ENCODE measurements at regions of chr1 and their contacts with region 1.

Region 1: GRCh38 chr1:26993237-26994019 is at the start of gene TRNP1:
- DNase-seq: peak; percentile 24 to 79 (median 50)
- ATAC-seq: peak; percentile 75
- H3K4me3 ChIP-seq: peak within 1 kb of the TSS; percentile 53
- H3K4me3 Mint-ChIP-seq: peak within 1 kb of the TSS; percentile 74 to 91 (median 78)
- H3K27ac ChIP-seq: no peak within 1 kb of the TSS
- H3K27ac Mint-ChIP-seq: peak within 1 kb of the TSS in 3 of 9 donors; percentile 48 to 68 (median 50)
- H3K4me1 ChIP-seq: peaks cover 5 to 21% of the 10 kb centered on the region in 2 donors
- H3K4me1 Mint-ChIP-seq: peaks cover 5 to 27% (median 22%) of the 10 kb centered on the region in 7 donors
- H3K27me3 ChIP-seq: peaks cover 0 to 18% of the 10 kb centered on the region in 2 donors
- H3K27me3 Mint-ChIP-seq: peaks cover 37 to 71% (median 42%) of the 10 kb centered on the region in 5 donors
- total RNA-seq, gene TRNP1: 0.19 to 5.0 TPM in 2 of 5 experiments, not detected in the others

Region 2: GRCh38 chr1:26900001-26900814 is 93.2 kb before region 1 on chr1 and contains the start of gene GPATCH3:
- CTCF ChIA-PET with region 1: no interaction called
- POLR2A ChIA-PET with region 1: no interaction called
- intact Hi-C with region 1: loop called in 1 of 2 experiments (anchors 5 kb)
- DNase-seq: peak; percentile 68 to 89 (median 86)
- ATAC-seq: peak; percentile 93
- H3K4me3 ChIP-seq: peak within 1 kb of the TSS; percentile 94
- H3K4me3 Mint-ChIP-seq: peak within 1 kb of the TSS; percentile 87 to 99 (median 96)
- H3K27ac ChIP-seq: peak within 1 kb of the TSS; percentile 90
- H3K27ac Mint-ChIP-seq: peak within 1 kb of the TSS; percentile 94 to 100 (median 99)
- H3K4me1 ChIP-seq: peaks cover 10 to 16% of the 10 kb centered on the region in 2 donors
- H3K4me1 Mint-ChIP-seq: peaks cover 24 to 46% (median 39%) of the 10 kb centered on the region in 7 donors
- H3K27me3 ChIP-seq: no peaks in the 10 kb centered on the region
- H3K27me3 Mint-ChIP-seq: no peaks in the 10 kb centered on the region
- total RNA-seq, gene GPATCH3: 17.0 to 38.4 (median 22.6) TPM

Region 3: DNA sequence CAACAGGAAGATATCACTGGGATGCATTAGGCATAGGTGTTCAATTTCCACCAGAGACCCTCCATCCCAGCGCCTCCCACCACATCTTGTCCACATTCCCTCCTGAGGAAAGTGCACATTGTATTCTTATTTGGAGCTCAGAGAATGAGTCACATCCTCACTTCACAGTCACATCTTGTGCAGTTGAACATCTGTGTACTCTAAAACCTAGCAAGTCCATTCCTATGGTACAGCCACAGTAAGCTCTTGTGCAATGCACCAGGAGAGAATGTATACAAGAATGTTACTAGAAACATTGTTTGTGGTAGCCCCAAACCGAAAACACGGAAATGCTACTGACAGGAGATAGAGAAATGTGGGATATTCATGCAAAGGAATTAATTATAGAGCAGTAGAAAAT is 31.6 kb before region 1 on chr1:
- CTCF ChIA-PET with region 1: no interaction called
- POLR2A ChIA-PET with region 1: no interaction called
- intact Hi-C with region 1: loop called in 1 of 2 experiments (anchors 1 kb)
- DNase-seq: no peak
- ATAC-seq: no peak
- H3K4me3 ChIP-seq: no peak overlapping the region
- H3K4me3 Mint-ChIP-seq: peak overlapping the region in 1 of 10 donors; percentile 13
- H3K27ac ChIP-seq: no peak overlapping the region
- H3K27ac Mint-ChIP-seq: no peak overlapping the region
- H3K4me1 ChIP-seq: peaks cover 6 to 8% of the 10 kb centered on the region in 2 donors
- H3K4me1 Mint-ChIP-seq: peaks cover 4 to 11% (median 5%) of the 10 kb centered on the region in 7 donors
- H3K27me3 ChIP-seq: no peaks in the 10 kb centered on the region
- H3K27me3 Mint-ChIP-seq: peaks cover 12 to 69% (median 29%) of the 10 kb centered on the region in 5 donors

Region 4: GRCh38 chr1:27044613-27045151 is 51.3 kb after region 1 on chr1:
- CTCF ChIA-PET with region 1: interaction called, 6 read pairs
- POLR2A ChIA-PET with region 1: no interaction called
- intact Hi-C with region 1: loop called in 1 of 2 experiments (anchors 2 kb)
- DNase-seq: peak; percentile 69 to 92 (median 86)
- ATAC-seq: peak; percentile 95
- H3K4me3 ChIP-seq: peak overlapping the region; percentile 39
- H3K4me3 Mint-ChIP-seq: peak overlapping the region; percentile 39 to 85 (median 64)
- H3K27ac ChIP-seq: peak overlapping the region; percentile 58
- H3K27ac Mint-ChIP-seq: peak overlapping the region; percentile 1 to 86 (median 40)
- H3K4me1 ChIP-seq: peaks cover 0 to 15% of the 10 kb centered on the region in 2 donors
- H3K4me1 Mint-ChIP-seq: peaks cover 3 to 26% (median 19%) of the 10 kb centered on the region in 7 donors
- H3K27me3 ChIP-seq: no peaks in the 10 kb centered on the region
- H3K27me3 Mint-ChIP-seq: no peaks in the 10 kb centered on the region

Region 5: GRCh38 chr1:27097484-27097917 is 104.1 kb after region 1 on chr1:
- CTCF ChIA-PET with region 1: interaction called, 3 read pairs
- POLR2A ChIA-PET with region 1: no interaction called
- intact Hi-C with region 1: loop called (anchors 1 kb)
- DNase-seq: peak; percentile 49 to 79 (median 63)
- ATAC-seq: peak; percentile 83
- H3K4me3 ChIP-seq: no peak overlapping the region
- H3K4me3 Mint-ChIP-seq: no peak overlapping the region
- H3K27ac ChIP-seq: no peak overlapping the region
- H3K27ac Mint-ChIP-seq: no peak overlapping the region
- H3K4me1 ChIP-seq: no peaks in the 10 kb centered on the region
- H3K4me1 Mint-ChIP-seq: peaks cover 0 to 18% (median under 1%) of the 10 kb centered on the region in 7 donors
- H3K27me3 ChIP-seq: no peaks in the 10 kb centered on the region
- H3K27me3 Mint-ChIP-seq: no peaks in the 10 kb centered on the region